Naive thymus-derived CD4-positive, alpha-beta T cell (primary cell): ENCODE measurements at regions of chr4 and their contacts with region 1.

Region 1: GRCh38 chr4:139554893-139555704 is 920 bp downstream of the SETD7 start:
- DNase-seq: peak; percentile 65 to 93 (median 88)
- ATAC-seq: peak; percentile 85
- H3K4me3 ChIP-seq: peak overlapping the region; percentile 68
- H3K4me3 Mint-ChIP-seq: peak overlapping the region; percentile 89 to 99 (median 98)
- H3K27ac ChIP-seq: peak overlapping the region; percentile 76
- H3K27ac Mint-ChIP-seq: peak overlapping the region; percentile 86 to 98 (median 97)
- H3K4me1 ChIP-seq: peaks cover 4 to 11% of the 10 kb centered on the region in 2 donors
- H3K4me1 Mint-ChIP-seq: peaks cover 19 to 49% (median 40%) of the 10 kb centered on the region in 7 donors
- H3K27me3 ChIP-seq: no peaks in the 10 kb centered on the region
- H3K27me3 Mint-ChIP-seq: peaks cover 0 to 11% (median 0%) of the 10 kb centered on the region in 5 donors

Region 2: GRCh38 chr4:138242076-138242833 is 1312.8 kb before region 1 on chr4 and contains the start of gene SLC7A11:
- CTCF ChIA-PET with region 1: no interaction called
- POLR2A ChIA-PET with region 1: no interaction called
- intact Hi-C with region 1: loop called in 1 of 2 experiments (anchors 2 kb)
- DNase-seq: peak in 8 of 9 donors; percentile 13 to 61 (median 42)
- ATAC-seq: peak; percentile 94
- H3K4me3 ChIP-seq: peak within 1 kb of the TSS; percentile 35
- H3K4me3 Mint-ChIP-seq: peak within 1 kb of the TSS; percentile 70 to 97 (median 83)
- H3K27ac ChIP-seq: no peak within 1 kb of the TSS
- H3K27ac Mint-ChIP-seq: peak within 1 kb of the TSS; percentile 9 to 96 (median 64)
- H3K4me1 ChIP-seq: peaks cover 0 to 3% of the 10 kb centered on the region in 2 donors
- H3K4me1 Mint-ChIP-seq: peaks cover 0 to 36% (median 21%) of the 10 kb centered on the region in 7 donors
- H3K27me3 ChIP-seq: no peaks in the 10 kb centered on the region
- H3K27me3 Mint-ChIP-seq: no peaks in the 10 kb centered on the region
- total RNA-seq, gene SLC7A11: 0.21 to 2.8 (median 0.54) TPM

Region 3: DNA sequence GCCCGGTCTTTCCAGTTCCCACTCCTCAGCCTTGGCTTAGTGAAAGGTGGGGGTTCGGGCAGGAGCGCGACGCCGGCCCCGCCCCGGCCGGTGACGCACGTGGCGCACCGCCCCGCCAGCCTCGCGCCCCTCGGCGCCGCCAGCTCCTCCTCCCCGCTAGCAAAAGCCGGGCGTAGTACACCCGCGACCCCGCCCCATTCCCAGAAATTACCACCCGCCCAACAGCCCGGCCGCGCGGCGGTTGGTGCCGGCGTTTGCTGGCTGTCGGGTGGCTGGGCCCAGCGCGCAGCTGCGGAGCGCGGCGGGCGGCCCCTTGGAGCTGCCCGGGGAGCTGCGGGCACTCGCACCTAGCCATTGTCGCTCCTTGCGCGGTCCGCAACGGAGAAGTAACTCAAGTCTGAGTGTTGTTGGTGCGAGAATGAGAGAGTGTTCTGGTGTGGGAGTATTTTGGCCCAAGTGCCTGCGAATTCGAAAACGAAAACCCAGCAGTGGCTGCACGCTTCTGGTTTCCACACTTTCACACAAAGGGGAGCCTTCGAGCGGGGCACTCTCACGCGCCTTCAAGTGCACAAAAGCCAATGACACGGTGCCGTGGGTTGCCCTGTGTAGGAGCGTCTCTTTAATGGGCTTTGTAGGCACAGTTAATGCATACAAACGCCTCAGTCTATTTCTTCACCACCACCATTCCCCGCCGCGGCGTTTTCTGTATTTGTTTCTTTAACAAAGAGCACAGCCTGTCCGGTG is 377.1 kb before region 1 on chr4:
- CTCF ChIA-PET with region 1: no interaction called
- POLR2A ChIA-PET with region 1: no interaction called
- intact Hi-C with region 1: loop called (anchors 1 kb)
- DNase-seq: peak; percentile 84 to 98 (median 92)
- ATAC-seq: peak; percentile 84
- H3K4me3 ChIP-seq: peak overlapping the region; percentile 71
- H3K4me3 Mint-ChIP-seq: peak overlapping the region; percentile 86 to 95 (median 91)
- H3K27ac ChIP-seq: peak overlapping the region; percentile 86
- H3K27ac Mint-ChIP-seq: peak overlapping the region; percentile 90 to 97 (median 94)
- H3K4me1 ChIP-seq: peaks cover 0 to 11% of the 10 kb centered on the region in 2 donors
- H3K4me1 Mint-ChIP-seq: peaks cover 0 to 31% (median 17%) of the 10 kb centered on the region in 7 donors
- H3K27me3 ChIP-seq: no peaks in the 10 kb centered on the region
- H3K27me3 Mint-ChIP-seq: peaks cover 0 to 44% (median 0%) of the 10 kb centered on the region in 5 donors

Region 4: GRCh38 chr4:139522457-139522856 is 32.6 kb before region 1 on chr4:
- CTCF ChIA-PET with region 1: no interaction called
- POLR2A ChIA-PET with region 1: no interaction called
- intact Hi-C with region 1: loop called in 1 of 2 experiments (anchors 5 kb)
- DNase-seq: no peak
- ATAC-seq: no peak
- H3K4me3 ChIP-seq: no peak overlapping the region
- H3K4me3 Mint-ChIP-seq: no peak overlapping the region
- H3K27ac ChIP-seq: no peak overlapping the region
- H3K27ac Mint-ChIP-seq: no peak overlapping the region
- H3K4me1 ChIP-seq: peaks cover 0 to 17% of the 10 kb centered on the region in 2 donors
- H3K4me1 Mint-ChIP-seq: peaks cover 5 to 15% (median 6%) of the 10 kb centered on the region in 7 donors
- H3K27me3 ChIP-seq: no peaks in the 10 kb centered on the region
- H3K27me3 Mint-ChIP-seq: no peaks in the 10 kb centered on the region

Region 5: GRCh38 chr4:139603576-139604387 is 48.7 kb after region 1 on chr4:
- CTCF ChIA-PET with region 1: interaction called, 3 read pairs
- POLR2A ChIA-PET with region 1: interaction called, 5 read pairs
- intact Hi-C with region 1: loop called (anchors 1 to 2 kb)
- DNase-seq: peak in 7 of 9 donors; percentile 5 to 46 (median 33)
- ATAC-seq: peak; percentile 54
- H3K4me3 ChIP-seq: no peak overlapping the region
- H3K4me3 Mint-ChIP-seq: no peak overlapping the region
- H3K27ac ChIP-seq: no peak overlapping the region
- H3K27ac Mint-ChIP-seq: no peak overlapping the region
- H3K4me1 ChIP-seq: no peaks in the 10 kb centered on the region
- H3K4me1 Mint-ChIP-seq: peaks cover 13 to 23% (median 17%) of the 10 kb centered on the region in 7 donors
- H3K27me3 ChIP-seq: no peaks in the 10 kb centered on the region
- H3K27me3 Mint-ChIP-seq: peaks cover 10 to 21% (median 14%) of the 10 kb centered on the region in 5 donors

Region 6: DNA sequence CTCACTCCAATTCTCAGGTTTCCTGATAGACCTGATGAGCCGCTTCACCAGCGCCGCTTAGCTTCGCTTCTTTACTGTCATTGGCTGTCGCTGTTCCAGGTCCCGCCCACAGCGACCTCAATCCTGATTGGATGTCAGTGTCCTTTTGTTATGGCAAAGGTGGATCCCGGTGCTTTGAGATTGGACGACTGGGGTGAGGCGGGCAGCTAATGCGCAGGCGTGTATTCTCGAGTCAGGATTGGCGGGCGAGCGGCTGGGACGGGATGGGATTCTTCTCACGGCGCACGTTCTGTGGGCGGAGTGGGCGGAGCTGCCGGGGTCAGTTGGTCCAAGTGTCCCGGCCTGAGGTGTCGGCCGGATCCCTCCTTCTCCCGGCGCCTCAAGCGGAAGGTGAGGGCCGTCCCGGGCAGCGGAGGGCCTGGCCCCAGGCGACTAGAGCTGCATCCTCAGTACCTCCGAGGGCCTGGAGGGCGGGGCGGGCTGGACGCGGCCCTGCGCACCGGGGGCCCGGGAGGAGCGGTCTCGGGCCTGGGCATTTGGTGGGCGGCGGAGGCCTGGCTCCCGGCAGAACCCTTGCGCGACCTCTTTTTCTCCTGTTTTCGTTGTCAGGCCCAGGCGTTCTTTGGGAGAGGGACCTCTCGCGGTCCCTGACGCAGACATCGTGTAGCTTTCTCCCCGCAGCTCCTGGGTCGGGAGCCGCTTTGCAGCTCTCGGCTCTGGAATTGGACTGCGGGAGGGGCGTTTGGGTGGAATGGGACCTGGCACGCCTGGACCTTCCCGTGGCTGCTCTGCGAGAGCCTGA is 818.4 kb after region 1 on chr4 and contains the start of gene SCOC:
- CTCF ChIA-PET with region 1: no interaction called
- POLR2A ChIA-PET with region 1: interaction called, 3 read pairs
- intact Hi-C with region 1: loop called in 1 of 2 experiments (anchors 2 kb)
- DNase-seq: peak; percentile 80 to 98 (median 95)
- ATAC-seq: peak; percentile 98
- H3K4me3 ChIP-seq: peak within 1 kb of the TSS; percentile 79
- H3K4me3 Mint-ChIP-seq: peak within 1 kb of the TSS in 2 of 10 donors; percentile 87 to 90
- H3K27ac ChIP-seq: peak within 1 kb of the TSS; percentile 86
- H3K27ac Mint-ChIP-seq: peak within 1 kb of the TSS in 5 of 9 donors; percentile 47 to 90 (median 51)
- H3K4me1 ChIP-seq: peaks cover 6 to 7% of the 10 kb centered on the region in 2 donors
- H3K4me1 Mint-ChIP-seq: peaks cover 29 to 49% (median 43%) of the 10 kb centered on the region in 7 donors
- H3K27me3 ChIP-seq: no peaks in the 10 kb centered on the region
- H3K27me3 Mint-ChIP-seq: peaks cover 0 to 17% (median 0%) of the 10 kb centered on the region in 5 donors
- total RNA-seq, gene SCOC: 9.3 to 26.3 (median 22.6) TPM